ENCODE measurements at regions of chr6 and their contacts with region 1.

Region 1: DNA sequence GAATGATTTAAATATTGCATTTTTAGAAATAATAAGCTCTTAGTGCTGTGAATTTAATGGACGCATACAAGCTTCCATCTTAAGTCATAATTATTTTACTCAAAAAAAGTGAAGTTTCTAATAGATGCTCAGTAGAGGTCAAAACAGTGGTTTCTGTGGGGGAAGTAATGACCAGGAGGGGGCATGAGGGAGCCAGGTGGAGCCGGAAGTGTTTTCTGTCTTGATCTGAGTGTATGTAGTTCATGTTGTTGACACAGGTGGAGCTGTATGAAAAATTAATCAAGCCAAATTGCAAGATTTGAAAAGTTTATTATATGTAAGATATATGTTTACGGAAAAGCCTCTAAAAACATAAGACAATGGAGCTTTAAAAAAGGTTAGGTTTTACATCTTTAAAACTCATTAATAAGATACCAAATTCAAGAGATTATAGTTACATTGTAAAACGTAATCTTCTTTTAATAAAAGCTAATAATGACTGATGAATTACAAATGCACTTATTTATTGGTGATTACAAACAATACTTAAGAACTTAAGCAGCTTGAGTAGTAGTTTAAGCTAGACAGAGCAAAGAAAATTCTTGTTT is 68.0 kb downstream of the PLAGL1 start:
- DNase-seq: peak; percentile 37 to 39
- H3K4me3 ChIP-seq: no peak overlapping the region
- H3K27ac ChIP-seq: no peak overlapping the region
- H3K4me1 ChIP-seq: no peaks in the 10 kb centered on the region
- H3K27me3 ChIP-seq: no peaks in the 10 kb centered on the region
- CTCF ChIP-seq: peak; percentile 85

Region 2: DNA sequence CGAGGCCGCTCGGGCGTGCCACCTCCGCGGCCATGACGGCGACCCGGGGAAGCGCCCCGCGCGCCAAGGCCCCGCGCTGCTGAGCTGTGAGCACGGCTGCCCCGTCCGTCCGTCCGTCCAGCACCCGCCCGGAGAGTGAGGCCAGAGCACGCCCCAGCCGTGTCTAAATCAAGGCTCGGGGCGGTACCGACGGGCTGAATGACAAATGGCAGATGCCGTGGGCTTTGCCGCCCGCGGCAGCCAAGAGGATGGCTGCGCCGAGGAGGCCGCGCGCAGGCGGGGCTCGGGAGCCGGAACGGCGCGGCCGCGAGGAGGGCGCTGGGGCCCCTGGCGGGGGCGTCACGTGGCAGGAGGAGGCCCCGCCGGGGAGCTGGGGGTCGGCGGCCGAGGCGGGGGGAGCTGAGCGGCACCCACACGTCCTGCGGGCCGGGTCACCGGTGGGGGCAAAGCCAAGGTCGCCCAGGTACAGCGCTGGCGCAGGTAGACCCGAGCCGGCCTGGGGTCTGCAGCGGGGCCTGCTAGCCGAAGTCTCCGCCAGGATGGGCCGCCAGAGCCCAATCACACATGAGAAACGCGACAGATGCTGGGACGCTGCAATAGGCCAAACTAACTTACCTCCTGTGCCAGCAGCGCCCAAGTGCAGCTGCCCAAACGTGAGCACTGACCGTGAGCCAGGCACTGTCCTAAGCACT is 68.2 kb after region 1 on chr6 and contains the start of gene PLAGL1:
- CTCF ChIA-PET with region 1: interaction called, 5 read pairs
- POLR2A ChIA-PET with region 1: no interaction called
- intact Hi-C with region 1: loop called (anchors 5 kb)
- DNase-seq: peak in 1 of 2 experiments; percentile 51
- H3K4me3 ChIP-seq: peak within 1 kb of the TSS; percentile 61
- H3K27ac ChIP-seq: no peak within 1 kb of the TSS
- H3K4me1 ChIP-seq: 0 out of 2 replicates have a peak, but pooled peaks cover 5% of the 10 kb centered on the region
- H3K27me3 ChIP-seq: peaks cover 4% of the 10 kb centered on the region; the same call in 1 of the 2 replicates
- CTCF ChIP-seq: no peak
- total RNA-seq, gene PLAGL1: 7.8 and 8.3 TPM in 2 replicates

Measured in PC-9 (cell line).